ENCODE measurements at regions of chr5 and their contacts with region 1.

Region 1: GRCh38 chr5:30981576-30981975 is 211.9 kb upstream of the CDH6 start:
- DNase-seq: no peak
- H3K27ac ChIP-seq: no peak overlapping the region
- CTCF ChIP-seq: no peak

Region 2: DNA sequence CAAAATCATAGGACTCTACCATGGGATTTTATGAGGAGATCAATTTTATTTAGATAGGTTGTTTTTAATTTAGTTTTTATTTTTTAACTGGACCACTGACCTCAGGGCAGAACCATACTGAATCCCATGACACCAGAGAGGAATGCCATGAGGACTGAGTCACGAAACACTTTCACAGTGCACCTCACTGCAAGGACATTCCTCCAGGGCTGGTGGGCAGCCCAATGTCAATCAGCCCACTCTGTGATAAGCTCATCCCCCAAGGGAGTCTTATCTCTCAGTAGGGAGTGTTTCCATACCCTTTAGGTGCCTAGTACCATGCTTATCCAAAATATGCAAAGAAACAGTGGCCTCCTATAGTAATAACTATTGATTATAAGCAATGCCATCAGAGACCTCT is 12.6 kb before region 1 on chr5:
- CTCF ChIA-PET with region 1: no interaction called
- POLR2A ChIA-PET with region 1: interaction called, 12 read pairs
- DNase-seq: no peak
- H3K27ac ChIP-seq: no peak overlapping the region
- CTCF ChIP-seq: no peak